SK-N-SH (cell line): ENCODE measurements at regions of chr15 and their contacts with region 1.

Region 1: GRCh38 chr15:35751413-35752133 is 205.6 kb upstream of the DPH6 start:
- DNase-seq: peak; percentile 55
- H3K4me3 ChIP-seq: no peak overlapping the region; a peak in 1 of 4 replicates
- H3K27ac ChIP-seq: no peak overlapping the region; a peak in 1 of 4 replicates
- H3K4me1 ChIP-seq: peaks cover 0 to 19% of the 10 kb centered on the region in 2 experiments; a peak in 3 of 4 replicates
- H3K27me3 ChIP-seq: no peaks in the 10 kb centered on the region
- CTCF ChIP-seq: peak; percentile 84
- EP300 ChIP-seq: no peak; a peak in 1 of 4 replicates
- RAD21 ChIP-seq: peak; percentile 93

Region 2: DNA sequence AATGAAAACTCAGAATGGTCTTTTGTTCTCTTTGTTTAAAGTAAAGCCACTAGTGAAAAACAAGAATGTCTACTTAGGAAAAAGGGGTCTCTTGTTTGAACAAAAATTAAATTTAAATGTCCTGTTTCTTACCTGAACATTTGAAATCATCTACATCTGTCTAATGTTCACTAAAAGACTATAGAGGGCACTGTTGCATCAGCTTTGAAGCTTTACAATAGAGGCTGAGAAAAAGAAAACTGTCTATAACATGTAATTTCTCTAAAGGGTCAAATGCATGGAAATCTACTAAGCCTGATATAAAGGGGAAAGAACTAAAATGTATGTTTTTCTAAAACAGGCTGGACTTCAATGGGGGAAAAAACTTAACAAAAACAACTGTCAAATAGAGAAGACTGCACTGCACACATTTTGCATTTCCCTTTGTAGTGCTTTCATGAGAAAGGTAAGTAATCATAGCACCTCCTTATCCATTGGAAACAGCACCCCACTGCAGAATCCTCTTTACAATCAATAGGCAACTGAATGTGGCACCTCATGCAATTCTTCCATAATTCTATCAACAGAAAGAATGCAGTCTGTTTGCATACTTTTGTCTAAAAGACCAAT is 231.9 kb before region 1 on chr15:
- CTCF ChIA-PET with region 1: interaction called, 11 read pairs
- POLR2A ChIA-PET with region 1: no interaction called
- DNase-seq: peak; percentile 11
- H3K4me3 ChIP-seq: no peak overlapping the region
- H3K27ac ChIP-seq: peak overlapping the region in 1 of 2 experiments; percentile 69; a peak in 1 of 4 replicates
- H3K4me1 ChIP-seq: peaks cover under 1 to 9% of the 10 kb centered on the region in 2 experiments; a peak in 3 of 4 replicates
- H3K27me3 ChIP-seq: no peaks in the 10 kb centered on the region
- CTCF ChIP-seq: peak; percentile 87
- EP300 ChIP-seq: no peak
- RAD21 ChIP-seq: peak; percentile 93

Region 3: DNA sequence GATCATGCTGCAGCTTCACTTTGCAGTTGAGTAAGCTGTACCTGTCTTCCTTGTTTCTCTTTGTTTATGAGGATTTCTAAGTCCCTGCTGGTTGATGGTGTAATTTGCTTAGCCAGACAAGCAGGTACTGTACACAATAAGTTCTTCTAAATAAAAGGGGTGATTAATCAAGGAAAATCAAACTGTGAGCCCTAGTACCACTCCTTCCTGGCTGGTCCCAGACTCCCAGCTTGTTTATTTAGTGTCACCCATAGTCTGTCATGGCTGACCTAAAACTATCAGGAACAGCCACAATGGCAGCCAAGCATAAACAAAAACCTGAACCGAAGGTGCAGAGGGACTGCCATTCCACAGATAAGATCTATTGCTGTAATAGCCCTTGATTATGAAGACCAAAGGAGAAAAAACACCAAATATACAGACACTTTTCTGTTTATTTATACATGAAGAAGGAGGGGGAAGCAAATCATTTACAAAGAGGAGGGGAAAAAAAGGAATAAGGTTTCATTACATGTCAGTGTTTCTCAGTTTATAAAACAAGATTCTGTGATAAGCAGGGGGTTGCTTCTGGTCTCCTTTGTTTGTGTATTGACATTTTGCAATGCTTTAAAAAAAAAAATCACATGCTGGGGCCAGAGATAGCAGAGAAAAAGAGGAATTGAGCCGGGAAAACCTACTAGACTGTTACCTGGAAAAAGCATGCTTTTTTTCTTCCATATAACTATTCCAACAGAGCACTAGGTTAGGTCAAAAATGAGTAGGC is 23.2 kb before region 1 on chr15:
- CTCF ChIA-PET with region 1: no interaction called
- POLR2A ChIA-PET with region 1: no interaction called
- DNase-seq: peak; percentile 15
- H3K4me3 ChIP-seq: no peak overlapping the region
- H3K27ac ChIP-seq: no peak overlapping the region
- H3K4me1 ChIP-seq: peaks cover 0 to 10% of the 10 kb centered on the region in 2 experiments; a peak in 2 of 4 replicates
- H3K27me3 ChIP-seq: no peaks in the 10 kb centered on the region
- CTCF ChIP-seq: no peak
- EP300 ChIP-seq: no peak
- RAD21 ChIP-seq: no peak

Region 4: DNA sequence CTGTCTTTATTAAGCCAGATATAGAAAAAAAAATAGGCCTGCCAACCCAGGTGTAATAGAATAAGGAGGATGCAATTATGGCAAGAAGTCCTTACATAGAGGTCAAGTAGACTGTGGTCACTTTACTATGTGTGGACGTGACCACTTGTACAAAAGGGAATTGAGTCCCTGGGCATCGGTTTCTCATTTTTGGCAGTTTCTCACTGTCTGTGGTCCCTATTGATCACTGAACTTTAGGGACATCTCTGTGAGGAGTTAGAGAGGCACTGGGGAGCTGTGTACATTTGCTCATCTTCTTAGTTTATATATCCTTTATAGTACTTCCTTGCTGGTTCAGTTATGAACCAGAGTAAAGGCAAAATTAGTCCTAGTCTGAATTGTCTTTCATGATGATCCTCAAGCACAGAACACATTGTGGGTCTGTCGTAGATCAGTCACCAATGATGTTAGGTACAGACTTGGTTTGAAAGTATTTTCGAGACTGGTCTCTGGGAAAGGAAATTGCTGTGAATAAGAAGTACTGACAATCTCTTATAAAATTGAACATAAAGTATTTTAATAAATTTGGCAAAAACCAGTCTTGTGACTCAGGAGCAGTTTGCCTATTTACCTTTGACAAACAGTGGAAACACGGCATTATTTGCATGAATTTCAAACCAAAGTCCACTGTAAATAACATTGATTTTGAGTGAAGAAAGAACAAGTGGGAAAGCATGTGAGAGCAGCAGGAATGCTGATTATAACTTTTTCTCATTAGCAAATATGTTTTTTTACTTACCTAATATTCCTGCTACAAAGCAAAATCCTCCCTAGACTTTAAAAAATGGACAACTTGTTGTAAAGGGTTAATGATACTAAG is 13.3 kb after region 1 on chr15:
- CTCF ChIA-PET with region 1: interaction called, 21 read pairs
- POLR2A ChIA-PET with region 1: no interaction called
- DNase-seq: no peak
- H3K4me3 ChIP-seq: no peak overlapping the region
- H3K27ac ChIP-seq: no peak overlapping the region
- H3K4me1 ChIP-seq: no peaks in the 10 kb centered on the region
- H3K27me3 ChIP-seq: no peaks in the 10 kb centered on the region
- CTCF ChIP-seq: no peak
- EP300 ChIP-seq: no peak
- RAD21 ChIP-seq: no peak

Region 5: DNA sequence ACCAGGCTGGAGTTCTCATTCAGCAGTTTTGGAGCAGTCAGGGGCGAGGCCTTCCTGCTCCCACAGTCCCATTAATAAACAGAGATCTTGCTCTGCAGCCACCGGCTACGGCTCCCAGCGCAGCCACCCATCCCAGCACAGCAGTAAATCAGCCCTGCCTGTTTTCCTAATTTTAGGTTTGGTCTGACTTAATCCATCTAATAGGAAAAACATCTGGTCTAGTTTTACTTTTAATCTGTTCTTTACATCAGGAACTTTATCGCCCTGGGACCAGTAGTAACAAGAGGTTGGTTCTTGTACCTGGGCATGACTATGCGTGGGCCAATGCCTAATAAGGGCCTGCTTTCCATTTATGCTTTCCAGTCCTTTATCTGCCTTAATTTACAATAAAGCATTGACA is 58.4 kb after region 1 on chr15:
- CTCF ChIA-PET with region 1: interaction called, 12 read pairs
- POLR2A ChIA-PET with region 1: no interaction called
- DNase-seq: peak; percentile 53
- H3K4me3 ChIP-seq: no peak overlapping the region
- H3K27ac ChIP-seq: peak overlapping the region in 1 of 2 experiments; percentile 74; a peak in 2 of 4 replicates
- H3K4me1 ChIP-seq: peaks cover 0 to 10% of the 10 kb centered on the region in 2 experiments; a peak in 2 of 4 replicates
- H3K27me3 ChIP-seq: no peaks in the 10 kb centered on the region
- CTCF ChIP-seq: no peak
- EP300 ChIP-seq: peak in 1 of 2 experiments; percentile 95; a peak in 2 of 4 replicates
- RAD21 ChIP-seq: peak; percentile 29

Region 6: DNA sequence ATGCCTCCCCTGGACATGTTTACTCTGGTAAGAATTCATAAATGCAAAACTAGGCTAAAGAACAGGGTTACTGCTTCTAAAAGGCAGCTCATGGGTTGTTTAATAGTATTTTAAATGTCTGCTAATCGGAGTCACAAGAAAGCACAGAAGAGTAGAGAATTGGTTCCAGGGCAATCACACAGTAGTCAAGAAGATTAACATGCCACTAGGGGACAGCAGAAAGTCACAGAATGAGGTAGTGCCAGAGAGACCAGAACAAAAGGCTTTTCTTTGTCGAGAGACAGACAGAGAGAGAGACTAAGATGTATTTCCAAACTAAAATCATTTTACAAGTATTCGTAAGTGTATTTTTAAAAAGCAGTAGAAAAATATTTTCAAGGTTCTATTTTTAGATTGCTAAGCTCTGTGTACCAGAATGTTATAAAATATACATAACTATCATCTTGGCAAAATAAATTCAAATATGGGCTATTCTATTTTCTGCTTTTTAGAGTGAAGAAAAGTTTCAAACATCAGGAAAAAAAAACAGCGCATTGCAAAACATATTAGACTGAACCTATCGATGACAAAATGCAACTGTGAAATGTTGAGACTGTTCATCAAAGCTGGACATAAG is 749.6 kb after region 1 on chr15:
- CTCF ChIA-PET with region 1: interaction called, 18 read pairs
- POLR2A ChIA-PET with region 1: no interaction called
- DNase-seq: peak; percentile 57
- H3K4me3 ChIP-seq: no peak overlapping the region
- H3K27ac ChIP-seq: peak overlapping the region; percentile 40 to 55
- H3K4me1 ChIP-seq: peaks cover 4 to 12% of the 10 kb centered on the region in 2 experiments; a peak in 2 of 4 replicates
- H3K27me3 ChIP-seq: no peaks in the 10 kb centered on the region
- CTCF ChIP-seq: peak; percentile 87
- EP300 ChIP-seq: no peak
- RAD21 ChIP-seq: peak; percentile 98